PC-3 (cell line): ENCODE measurements at regions of chr16 and their contacts with region 1.

Region 1: GRCh38 chr16:740764-741505 is at the start of gene CIAO3:
- DNase-seq: peak; percentile 86
- ATAC-seq: peak; percentile 81
- H3K4me3 ChIP-seq: peak within 1 kb of the TSS; percentile 89
- H3K27ac ChIP-seq: no peak within 1 kb of the TSS
- H3K4me1 ChIP-seq: peaks cover 5% of the 10 kb centered on the region; the same call in 1 of the 2 replicates
- H3K27me3 ChIP-seq: no peaks in the 10 kb centered on the region
- CTCF ChIP-seq: peak; percentile 76
- total RNA-seq, gene CIAO3: 46.1 and 62.5 TPM in 2 replicates

Region 2: DNA sequence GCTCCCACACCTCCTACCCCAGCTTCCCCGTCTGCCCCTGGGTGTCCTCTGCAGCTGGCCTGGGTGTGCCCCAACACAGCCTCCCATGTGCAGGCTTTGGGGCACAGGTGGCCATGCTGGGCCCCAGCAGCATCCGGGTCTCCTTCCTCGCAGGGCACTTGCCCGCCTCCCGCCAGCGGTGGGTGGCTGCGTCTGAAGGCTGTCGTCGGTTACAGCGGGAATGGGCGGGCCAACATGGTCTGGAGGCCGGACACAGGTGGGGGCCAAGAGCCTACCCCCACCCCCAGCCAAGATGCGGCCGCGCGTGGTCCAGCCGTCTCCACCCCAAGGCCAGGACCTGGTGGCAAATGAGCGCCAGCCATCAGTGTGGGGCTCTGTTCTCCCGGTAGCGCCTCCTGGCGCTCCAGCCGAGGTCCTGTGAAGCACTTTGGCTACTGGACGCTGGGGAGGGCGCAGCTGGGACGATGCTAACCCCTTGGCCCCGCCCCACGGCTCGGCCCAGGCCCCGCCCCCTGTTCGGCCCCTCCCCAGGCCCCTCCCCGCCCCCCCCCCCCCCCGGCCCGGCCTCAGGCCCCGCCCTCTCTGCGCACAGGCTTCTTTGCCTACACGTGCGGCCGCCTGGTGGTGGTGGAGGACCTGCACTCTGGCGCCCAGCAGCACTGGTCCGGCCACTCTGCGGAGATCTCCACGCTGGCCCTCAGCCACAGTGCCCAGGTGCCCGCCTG is 80.3 kb before region 1 on chr16:
- CTCF ChIA-PET with region 1: no interaction called
- POLR2A ChIA-PET with region 1: no interaction called
- intact Hi-C with region 1: no loop called
- DNase-seq: peak; percentile 79
- ATAC-seq: peak; percentile 90
- H3K4me3 ChIP-seq: peak overlapping the region; percentile 42; the same call in 1 of the 2 replicates
- H3K27ac ChIP-seq: no peak overlapping the region
- H3K4me1 ChIP-seq: peaks cover 5% of the 10 kb centered on the region
- H3K27me3 ChIP-seq: no peaks in the 10 kb centered on the region
- CTCF ChIP-seq: peak; percentile 36

Region 3: DNA sequence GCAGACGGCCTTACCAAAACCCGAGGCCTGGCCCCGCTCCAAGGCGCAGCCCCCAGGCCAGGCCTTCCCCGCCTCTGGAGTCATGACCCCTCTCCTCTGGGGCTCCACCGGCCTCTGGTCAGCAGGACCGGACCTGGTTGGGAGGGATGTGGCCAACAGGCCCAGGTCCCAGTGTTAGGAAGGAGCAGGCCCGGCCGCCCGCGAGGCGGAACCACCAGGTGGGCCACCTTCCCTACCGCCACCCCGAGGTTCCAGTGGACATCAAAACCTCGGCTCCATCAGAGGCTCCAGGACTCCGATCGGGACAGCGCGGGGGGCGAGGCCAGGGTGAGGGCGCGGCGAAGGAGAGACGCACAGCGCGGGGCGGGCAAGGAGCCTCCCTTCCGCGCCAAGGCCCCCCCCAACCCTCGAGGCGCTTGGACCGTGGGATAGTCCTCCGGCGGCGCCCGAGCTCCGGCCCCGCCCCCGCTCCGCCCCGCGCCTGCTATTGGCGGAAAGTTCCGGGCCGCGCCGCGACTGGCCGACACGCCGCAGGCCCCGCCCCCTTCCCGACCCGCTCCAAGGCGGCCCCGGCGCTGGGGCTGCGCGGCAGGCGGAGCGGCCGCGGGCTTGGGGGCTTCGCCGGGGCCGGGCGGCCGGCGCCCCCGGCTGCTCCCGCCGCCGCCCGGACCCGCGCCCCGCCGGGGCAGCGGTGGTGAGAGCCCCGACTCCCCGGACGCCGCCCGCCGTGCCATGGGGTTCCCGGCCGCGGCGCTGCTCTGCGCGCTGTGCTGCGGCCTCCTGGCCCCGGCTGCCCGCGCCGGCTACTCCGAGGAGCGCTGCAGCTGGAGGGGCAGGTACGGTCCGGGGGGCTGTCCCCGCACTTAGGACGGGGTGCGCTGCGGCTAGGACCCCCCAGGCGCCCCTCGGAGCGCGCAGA is 26.1 kb before region 1 on chr16 and contains the start of gene METRN:
- CTCF ChIA-PET with region 1: interaction called, 3 read pairs
- POLR2A ChIA-PET with region 1: interaction called, 14 read pairs
- intact Hi-C with region 1: no loop called
- DNase-seq: peak; percentile 84
- ATAC-seq: peak; percentile 58
- H3K4me3 ChIP-seq: peak within 1 kb of the TSS; percentile 71
- H3K27ac ChIP-seq: peak within 1 kb of the TSS; percentile 63
- H3K4me1 ChIP-seq: peaks cover 28% of the 10 kb centered on the region
- H3K27me3 ChIP-seq: 0 out of 2 replicates have a peak, but pooled peaks cover 2% of the 10 kb centered on the region
- CTCF ChIP-seq: no peak
- total RNA-seq, gene METRN: 314 and 320 TPM in 2 replicates

Region 4: DNA sequence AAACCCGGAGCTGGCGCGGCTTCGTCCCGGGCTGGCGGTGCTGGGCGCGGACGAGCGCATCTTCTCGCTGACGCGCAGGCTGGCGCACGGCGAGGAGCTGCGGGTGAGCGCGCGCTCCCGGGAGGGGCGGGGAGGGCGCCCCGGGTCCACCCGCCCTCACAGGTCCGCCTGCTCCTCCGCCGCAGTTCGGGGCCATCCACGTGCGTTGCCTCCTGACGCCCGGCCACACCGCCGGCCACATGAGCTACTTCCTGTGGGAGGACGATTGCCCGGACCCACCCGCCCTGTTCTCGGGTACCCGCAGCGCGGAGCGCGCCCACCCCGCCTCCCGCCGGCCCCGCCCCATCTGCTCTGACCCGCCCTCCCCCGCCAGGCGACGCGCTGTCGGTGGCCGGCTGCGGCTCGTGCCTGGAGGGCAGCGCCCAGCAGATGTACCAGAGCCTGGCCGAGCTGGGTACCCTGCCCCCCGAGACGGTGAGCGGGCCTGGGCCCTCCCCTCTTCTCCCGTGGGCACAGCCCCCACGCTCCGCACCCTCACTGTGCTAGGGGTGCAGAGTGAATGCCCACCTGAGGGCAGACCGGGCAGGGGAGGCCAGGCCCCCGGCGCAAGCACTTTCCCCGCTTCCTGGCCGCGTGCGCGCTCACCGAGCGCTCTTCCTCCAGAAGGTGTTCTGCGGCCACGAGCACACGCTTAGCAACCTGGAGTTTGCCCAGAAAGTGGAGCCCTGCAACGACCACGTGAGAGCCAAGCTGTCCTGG is 12.6 kb before region 1 on chr16:
- CTCF ChIA-PET with region 1: interaction called, 12 read pairs
- POLR2A ChIA-PET with region 1: no interaction called
- intact Hi-C with region 1: no loop called
- DNase-seq: peak; percentile 85
- ATAC-seq: peak; percentile 47
- H3K4me3 ChIP-seq: peak overlapping the region; percentile 66
- H3K27ac ChIP-seq: no peak overlapping the region
- H3K4me1 ChIP-seq: peaks cover 8% of the 10 kb centered on the region; the same call in 1 of the 2 replicates
- H3K27me3 ChIP-seq: no peaks in the 10 kb centered on the region
- CTCF ChIP-seq: no peak

Region 5: GRCh38 chr16:782766-783403 is 42.0 kb after region 1 on chr16:
- CTCF ChIA-PET with region 1: interaction called, 6 read pairs
- POLR2A ChIA-PET with region 1: no interaction called
- intact Hi-C with region 1: loop called (anchors 5 kb)
- DNase-seq: peak; percentile 58
- ATAC-seq: peak; percentile 39
- H3K4me3 ChIP-seq: peak overlapping the region; percentile 38; the same call in 1 of the 2 replicates
- H3K27ac ChIP-seq: no peak overlapping the region
- H3K4me1 ChIP-seq: peaks cover 13% of the 10 kb centered on the region
- H3K27me3 ChIP-seq: no peaks in the 10 kb centered on the region
- CTCF ChIP-seq: no peak